ENCODE measurements at regions of chr5 and their contacts with region 1.

Region 1: GRCh38 chr5:82165740-82166530 is 112.2 kb downstream of the RPS23 start:
- DNase-seq: peak; percentile 49
- H3K4me3 ChIP-seq: no peak overlapping the region
- H3K27ac ChIP-seq: no peak overlapping the region
- H3K4me1 ChIP-seq: peaks cover 4% of the 10 kb centered on the region
- H3K27me3 ChIP-seq: no peaks in the 10 kb centered on the region
- CTCF ChIP-seq: peak; percentile 53

Region 2: GRCh38 chr5:81425569-81425968 is 740.4 kb before region 1 on chr5:
- intact Hi-C with region 1: loop called (anchors 5 kb)
- DNase-seq: no peak
- H3K4me3 ChIP-seq: no peak overlapping the region
- H3K27ac ChIP-seq: no peak overlapping the region
- H3K4me1 ChIP-seq: no peaks in the 10 kb centered on the region
- H3K27me3 ChIP-seq: no peaks in the 10 kb centered on the region
- CTCF ChIP-seq: peak; percentile 55

Region 3: GRCh38 chr5:81751009-81751835 is 414.7 kb before region 1 on chr5 and contains the start of gene SSBP2:
- intact Hi-C with region 1: loop called (anchors 10 kb)
- DNase-seq: peak; percentile 100
- H3K4me3 ChIP-seq: peak within 1 kb of the TSS; percentile 64
- H3K27ac ChIP-seq: peak within 1 kb of the TSS; percentile 84
- H3K4me1 ChIP-seq: no peaks in the 10 kb centered on the region
- H3K27me3 ChIP-seq: no peaks in the 10 kb centered on the region
- CTCF ChIP-seq: no peak
- total RNA-seq, gene SSBP2: 11.1 to 28.0 TPM